CD4-positive, alpha-beta memory T cell (primary cell): ENCODE measurements at regions of chr2 and their contacts with region 1.

Region 1: DNA sequence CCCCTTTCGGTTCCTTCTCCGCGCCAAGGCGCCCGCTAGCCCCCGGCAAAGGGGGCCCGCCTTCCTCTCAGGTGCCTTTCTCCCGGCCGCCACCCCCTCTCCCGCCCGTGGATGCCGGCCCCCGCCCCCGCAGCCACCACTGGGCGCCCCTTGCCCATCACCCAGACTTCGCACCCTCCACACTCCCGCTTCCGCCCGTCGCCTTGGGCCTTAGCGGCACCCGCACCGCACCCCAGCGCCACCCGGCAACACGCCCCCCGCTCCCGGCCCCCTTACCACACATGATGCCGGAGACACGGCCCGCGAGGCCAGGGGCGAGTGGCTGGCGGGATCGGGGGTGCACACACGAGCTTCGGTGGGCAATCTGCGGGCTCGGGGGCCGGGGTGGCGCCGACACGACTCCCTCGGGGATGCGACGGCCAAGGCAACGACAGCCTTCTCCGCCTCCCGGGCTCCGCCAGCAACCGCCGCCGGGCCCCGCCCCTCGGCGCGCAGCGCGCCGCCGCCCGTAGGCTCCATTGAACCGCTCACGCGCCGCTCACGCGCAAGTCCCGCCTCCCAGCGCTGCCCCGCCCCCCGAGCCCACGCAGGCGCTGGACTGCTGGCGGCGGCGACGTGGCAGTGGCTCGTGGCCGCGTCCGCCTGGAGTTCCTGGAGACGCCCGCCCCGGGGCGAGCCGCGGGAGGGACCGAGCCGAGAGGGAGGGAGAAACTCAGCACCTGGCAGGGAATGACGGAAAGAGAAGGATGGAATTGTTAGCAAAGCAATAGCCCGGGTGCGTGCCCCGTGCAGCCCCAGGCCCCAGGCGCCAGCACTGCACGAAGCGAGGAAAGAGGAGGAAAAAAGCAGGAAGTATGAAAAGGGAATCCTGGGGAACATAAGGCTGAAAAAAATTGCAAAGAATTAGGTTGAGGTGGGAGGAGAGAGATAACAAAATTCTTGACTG is at the start of gene GFPT1:
- DNase-seq: peak; percentile 87 to 91 (median 90)
- H3K4me3 ChIP-seq: peak within 1 kb of the TSS; percentile 66 to 77
- H3K4me3 Mint-ChIP-seq: peak within 1 kb of the TSS; percentile 85 to 91 (median 89)
- H3K27ac ChIP-seq: peak within 1 kb of the TSS; percentile 66
- H3K27ac Mint-ChIP-seq: peak within 1 kb of the TSS; percentile 80 to 97 (median 89)
- H3K4me1 ChIP-seq: peaks cover 38% of the 10 kb centered on the region
- H3K4me1 Mint-ChIP-seq: peaks cover 27 to 50% (median 39%) of the 10 kb centered on the region in 4 donors
- H3K27me3 ChIP-seq: no peaks in the 10 kb centered on the region
- H3K27me3 Mint-ChIP-seq: no peaks in the 10 kb centered on the region
- total RNA-seq, gene GFPT1: 23.1 to 25.8 TPM

Region 2: GRCh38 chr2:69330781-69331180 is 56.3 kb before region 1 on chr2:
- CTCF ChIA-PET with region 1: no interaction called
- POLR2A ChIA-PET with region 1: no interaction called
- intact Hi-C with region 1: no loop called
- DNase-seq: no peak
- H3K4me3 ChIP-seq: no peak overlapping the region
- H3K4me3 Mint-ChIP-seq: no peak overlapping the region
- H3K27ac ChIP-seq: no peak overlapping the region
- H3K27ac Mint-ChIP-seq: no peak overlapping the region
- H3K4me1 ChIP-seq: no peaks in the 10 kb centered on the region
- H3K4me1 Mint-ChIP-seq: no peaks in the 10 kb centered on the region
- H3K27me3 ChIP-seq: no peaks in the 10 kb centered on the region
- H3K27me3 Mint-ChIP-seq: no peaks in the 10 kb centered on the region

Region 3: DNA sequence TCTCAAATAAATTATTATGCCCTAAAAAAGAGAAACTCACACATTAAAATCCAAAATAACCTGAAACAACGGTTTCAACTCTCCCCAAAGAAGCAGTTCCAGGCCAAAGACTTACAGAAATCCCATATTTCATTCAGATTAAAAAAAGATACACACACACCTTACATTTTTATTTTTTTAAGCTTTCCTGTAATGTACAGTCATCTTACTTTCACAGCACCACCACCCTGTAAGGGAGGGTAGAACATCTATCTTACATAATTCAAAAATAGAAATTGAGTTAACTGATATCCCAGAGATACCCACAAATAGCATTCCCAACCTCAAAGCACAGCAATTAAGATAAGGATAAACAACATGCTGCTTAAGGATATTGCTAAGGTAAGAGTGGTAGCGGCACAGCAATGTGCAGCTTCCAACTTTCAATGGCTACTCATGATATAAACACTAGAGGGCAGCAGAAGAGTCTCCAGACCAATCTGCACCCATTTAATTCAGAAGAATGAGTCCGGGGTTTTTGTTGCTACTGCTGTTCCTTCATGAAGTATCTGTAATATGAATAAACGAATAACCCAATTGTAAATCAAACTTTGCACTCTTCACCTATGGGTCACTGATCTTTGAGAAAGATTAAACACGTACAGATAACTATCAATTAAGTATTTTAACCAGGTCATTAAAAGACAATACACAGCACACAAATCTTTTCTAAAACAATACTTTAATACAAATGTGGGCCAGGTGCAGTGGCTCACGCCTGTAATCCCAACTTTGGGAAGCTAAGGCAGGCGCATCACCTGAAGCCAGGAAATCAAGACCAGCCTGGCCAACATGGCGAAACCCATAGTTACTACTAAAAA is 11.3 kb before region 1 on chr2:
- CTCF ChIA-PET with region 1: interaction called, 23 read pairs
- POLR2A ChIA-PET with region 1: interaction called, 3 read pairs
- intact Hi-C with region 1: no loop called
- DNase-seq: peak in 4 of 5 donors; percentile 19 to 38 (median 34)
- H3K4me3 ChIP-seq: no peak overlapping the region
- H3K4me3 Mint-ChIP-seq: peak overlapping the region in 2 of 8 donors; percentile 13 to 36
- H3K27ac ChIP-seq: no peak overlapping the region
- H3K27ac Mint-ChIP-seq: peak overlapping the region in 3 of 7 donors; percentile 0 to 36 (median 17)
- H3K4me1 ChIP-seq: no peaks in the 10 kb centered on the region
- H3K4me1 Mint-ChIP-seq: peaks cover 21 to 24% (median 22%) of the 10 kb centered on the region in 4 donors
- H3K27me3 ChIP-seq: no peaks in the 10 kb centered on the region
- H3K27me3 Mint-ChIP-seq: no peaks in the 10 kb centered on the region

Region 4: DNA sequence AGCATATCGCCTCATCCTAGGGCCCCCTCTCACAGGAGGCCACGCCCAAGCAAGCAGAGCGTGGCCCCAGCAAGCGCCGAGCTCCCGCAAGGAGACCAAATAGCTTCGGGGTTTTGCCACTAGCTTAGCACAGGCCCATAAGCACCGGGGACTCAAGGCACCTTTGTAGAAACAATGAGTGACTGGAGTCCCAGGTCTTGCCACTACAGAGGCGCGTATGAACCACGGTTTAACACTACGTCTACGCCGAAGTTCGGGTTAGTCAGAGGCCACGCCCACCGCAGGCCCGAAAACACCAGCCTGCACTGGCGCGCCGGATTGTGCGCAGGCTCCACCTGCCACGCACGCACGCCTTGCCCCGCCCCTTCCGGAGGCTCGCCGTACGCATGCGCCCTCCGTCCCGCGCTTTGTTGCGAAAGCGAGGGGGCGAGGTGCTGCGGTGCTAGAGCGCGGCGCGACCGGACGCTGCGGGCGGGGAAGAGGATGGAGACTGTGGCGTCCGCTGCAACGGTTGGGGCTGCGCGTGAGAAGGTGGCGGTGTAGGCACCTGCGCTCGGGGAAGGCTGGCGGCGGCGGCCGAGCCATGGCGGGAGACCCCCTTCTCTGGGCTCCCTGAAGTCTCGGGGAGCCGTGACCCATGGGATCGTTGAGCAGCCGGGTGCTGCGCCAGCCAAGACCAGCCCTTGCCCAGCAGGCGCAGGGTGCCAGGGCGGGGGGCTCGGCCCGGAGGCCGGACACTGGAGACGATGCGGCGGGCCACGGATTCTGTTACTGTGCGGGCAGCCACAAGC is 442.4 kb after region 1 on chr2 and contains the start of gene GMCL1:
- CTCF ChIA-PET with region 1: no interaction called
- POLR2A ChIA-PET with region 1: no interaction called
- intact Hi-C with region 1: loop called (anchors 1 kb)
- DNase-seq: peak; percentile 98 to 99 (median 99)
- H3K4me3 ChIP-seq: peak within 1 kb of the TSS; percentile 54 to 71
- H3K4me3 Mint-ChIP-seq: peak within 1 kb of the TSS; percentile 87 to 98 (median 96)
- H3K27ac ChIP-seq: peak within 1 kb of the TSS; percentile 92
- H3K27ac Mint-ChIP-seq: peak within 1 kb of the TSS; percentile 93 to 98 (median 96)
- H3K4me1 ChIP-seq: peaks cover 42% of the 10 kb centered on the region
- H3K4me1 Mint-ChIP-seq: peaks cover 21 to 69% (median 43%) of the 10 kb centered on the region in 4 donors
- H3K27me3 ChIP-seq: no peaks in the 10 kb centered on the region
- H3K27me3 Mint-ChIP-seq: no peaks in the 10 kb centered on the region
- total RNA-seq, gene GMCL1: 28.2 to 31.8 TPM